Head of caudate nucleus (tissue), 42 donors: ENCODE measurements at regions of chr13 and their contacts with region 1.

Region 1: GRCh38 chr13:36282818-36283445 is 14.7 kb downstream of the CCDC169 start:
- DNase-seq: peak in 1 of 42 donors; percentile 28

Region 2: GRCh38 chr13:35978603-35979316 is 304.2 kb before region 1 on chr13:
- intact Hi-C with region 1: loop called (anchors 5 kb)
- DNase-seq: peak in 21 of 42 donors; percentile 17 to 81 (median 54)

Region 3: DNA sequence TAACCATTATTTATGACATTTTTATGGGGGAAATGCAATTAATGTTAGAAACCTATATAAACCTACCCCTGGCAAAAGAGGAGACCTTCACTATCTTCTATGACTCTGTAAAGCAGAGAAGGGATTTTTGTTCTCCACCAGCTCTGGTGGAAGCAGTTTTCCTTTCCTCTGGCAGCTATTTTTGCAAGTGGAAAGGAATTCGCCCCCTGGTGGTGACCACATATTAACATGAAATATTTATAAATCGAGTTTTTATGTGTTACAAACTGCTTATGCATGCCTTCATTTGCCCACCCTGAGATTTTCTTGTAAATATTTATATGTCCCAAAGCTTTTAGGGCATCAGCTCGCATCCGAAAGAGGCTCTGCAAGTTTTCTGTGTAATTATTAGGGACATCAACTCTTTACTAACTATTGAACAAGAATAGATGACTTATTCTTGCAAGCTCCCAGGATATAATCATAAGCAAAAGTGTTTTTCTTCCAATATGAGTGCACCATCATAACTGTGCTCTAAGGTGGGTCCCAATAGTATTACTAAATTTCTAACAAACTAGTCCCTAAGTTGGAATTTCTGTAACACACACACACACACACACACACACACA is 453.3 kb after region 1 on chr13:
- intact Hi-C with region 1: loop called (anchors 5 kb)
- DNase-seq: peak in 40 of 42 donors; percentile 2 to 88 (median 64)